H1 (cell line): ENCODE measurements at regions of chr15 and their contacts with region 1.

Region 1: DNA sequence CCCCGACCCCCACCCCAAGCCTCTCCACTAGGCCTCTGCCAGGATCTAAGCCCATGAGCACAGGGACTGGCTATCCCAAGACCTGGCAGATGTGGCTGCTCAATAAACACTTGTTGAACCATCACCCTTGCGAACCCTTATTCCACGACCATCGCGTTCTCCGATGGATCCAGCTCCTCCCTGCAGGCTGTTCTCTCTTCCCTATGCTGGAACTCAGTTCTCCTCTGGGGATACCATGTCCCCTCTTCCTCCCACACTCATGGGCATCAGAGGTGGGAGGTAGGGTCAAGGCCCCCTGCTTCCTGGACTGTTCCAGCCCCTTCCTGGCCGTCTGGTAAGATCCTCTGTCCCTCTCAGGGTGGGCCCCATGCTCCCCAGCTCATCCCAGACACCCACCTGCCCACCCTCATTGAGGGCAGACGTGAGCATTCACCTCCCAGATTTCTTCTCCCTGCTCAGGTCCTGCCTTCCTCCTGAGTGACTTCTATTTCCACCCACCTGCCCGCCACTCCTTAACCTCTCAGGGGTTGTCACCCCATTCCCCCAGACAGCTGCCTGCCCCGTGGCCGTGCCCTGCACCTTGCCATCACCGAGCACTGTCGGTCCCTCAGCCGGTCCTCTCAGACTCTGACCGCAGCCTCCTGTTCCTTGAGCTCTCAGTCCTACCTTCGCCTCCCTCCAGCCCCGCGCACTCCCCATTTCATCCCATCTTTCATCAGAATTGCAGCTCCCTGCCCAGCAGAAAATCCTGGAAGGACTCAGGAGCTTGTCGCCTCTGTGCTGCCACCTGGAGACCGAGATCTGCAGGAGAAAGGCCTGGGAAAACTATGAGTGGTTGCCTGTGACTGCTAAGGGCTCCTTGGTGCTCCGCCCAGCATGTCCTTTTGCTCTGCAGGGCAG is 42.0 kb downstream of the PML start:
- DNase-seq: peak; percentile 58 to 84
- H3K4me3 ChIP-seq: no peak overlapping the region
- H3K27ac ChIP-seq: no peak overlapping the region; the same call in 1 of the 2 replicates
- H3K4me1 ChIP-seq: peaks cover 0 to 7% (median 6%) of the 10 kb centered on the region in 4 experiments; a peak in 4 of 7 replicates
- H3K27me3 ChIP-seq: no peaks in the 10 kb centered on the region
- CTCF ChIP-seq: peak; percentile 68 to 88 (median 82)
- EP300 ChIP-seq: no peak
- POLR2A ChIP-seq: no peak
- RAD21 ChIP-seq: peak; percentile 60 to 73

Region 2: DNA sequence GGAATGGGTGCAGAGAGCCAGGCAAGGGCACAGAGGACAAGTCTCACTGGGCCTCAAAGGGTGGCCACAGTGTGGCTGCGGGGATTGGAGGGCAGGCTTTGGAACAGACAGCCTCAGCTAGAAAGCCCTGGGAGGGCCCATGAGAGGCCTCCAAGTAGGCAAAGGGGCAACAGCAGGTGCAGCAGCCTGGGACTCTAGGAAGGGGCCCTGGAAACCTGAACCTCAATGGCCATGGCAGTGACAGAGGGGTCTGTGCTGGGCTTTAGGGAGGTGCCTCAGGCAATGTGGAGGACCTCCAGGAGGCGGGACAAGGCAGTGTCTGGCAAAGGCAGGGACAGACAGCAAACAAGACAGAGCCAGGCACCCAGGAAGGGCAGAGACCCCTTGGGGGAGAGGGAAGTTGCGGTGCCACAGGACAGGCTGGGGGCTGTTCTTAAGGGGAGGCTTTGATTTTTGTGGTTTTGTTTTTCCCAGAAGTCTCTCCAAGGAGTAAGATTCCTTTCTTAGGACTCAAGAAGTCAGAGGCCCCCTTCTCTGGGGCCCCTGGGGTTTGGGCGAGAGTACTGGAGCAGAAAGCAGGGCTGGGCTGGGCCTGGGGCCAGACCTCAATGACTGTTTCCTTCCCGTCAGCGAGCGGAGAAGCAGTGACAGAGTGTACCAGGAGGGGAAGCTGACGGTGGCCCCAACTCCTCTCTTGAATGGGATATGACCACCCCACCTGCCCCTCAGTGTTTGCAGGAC is 54.1 kb before region 1 on chr15:
- CTCF ChIA-PET with region 1: interaction called, 56 read pairs
- POLR2A ChIA-PET with region 1: interaction called, 3 read pairs
- DNase-seq: no peak
- H3K4me3 ChIP-seq: no peak overlapping the region
- H3K27ac ChIP-seq: no peak overlapping the region
- H3K4me1 ChIP-seq: no peaks in the 10 kb centered on the region; a peak in 1 of 7 replicates
- H3K27me3 ChIP-seq: no peaks in the 10 kb centered on the region; a peak in 1 of 7 replicates
- CTCF ChIP-seq: no peak
- EP300 ChIP-seq: no peak
- POLR2A ChIP-seq: no peak
- RAD21 ChIP-seq: no peak

Region 3: DNA sequence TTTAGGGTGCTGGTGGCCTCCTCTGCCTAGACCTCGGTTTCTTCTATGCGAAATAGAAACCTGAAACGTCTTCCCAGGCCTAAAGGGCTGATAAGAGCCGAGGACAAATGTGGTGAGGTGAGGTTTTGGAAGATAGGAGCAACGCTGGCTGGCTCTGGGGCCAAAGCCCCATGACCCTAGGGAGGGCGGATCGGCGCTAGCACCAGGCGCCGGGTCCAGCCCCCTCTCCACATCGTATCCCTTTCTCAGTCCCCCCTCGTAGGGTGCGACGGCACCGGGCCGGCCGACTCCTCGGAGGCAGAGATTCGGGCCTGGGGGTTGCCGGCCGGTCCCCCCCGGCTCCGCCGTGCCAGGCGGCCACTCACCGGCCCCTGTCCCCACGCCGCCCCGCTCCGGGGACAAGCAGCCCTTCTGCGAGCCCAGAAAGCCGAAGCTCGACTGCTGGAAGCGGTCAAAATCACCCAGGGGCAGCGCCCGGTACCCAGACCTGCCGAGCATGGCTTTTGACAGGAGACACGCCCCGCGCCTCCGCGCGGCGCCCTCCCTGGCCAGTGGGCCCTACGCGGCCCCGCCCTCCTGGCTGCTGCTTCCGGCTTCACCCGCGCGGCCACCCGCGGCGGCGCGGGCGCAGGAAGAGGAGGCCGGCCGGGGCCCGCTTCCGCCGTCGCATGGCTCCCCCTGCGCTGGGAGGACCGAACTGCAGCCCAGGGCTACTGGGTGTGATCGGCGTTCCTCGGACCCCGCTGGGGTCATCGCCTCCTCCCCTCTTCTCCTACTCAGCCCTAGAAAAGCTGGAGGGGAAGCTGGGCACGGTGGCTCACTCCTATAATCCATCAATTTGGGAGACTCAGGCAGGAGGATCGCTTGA is 44.6 kb before region 1 on chr15 and contains the start of gene STOML1:
- CTCF ChIA-PET with region 1: interaction called, 56 read pairs
- POLR2A ChIA-PET with region 1: no interaction called
- DNase-seq: peak; percentile 71 to 100
- H3K4me3 ChIP-seq: peak within 1 kb of the TSS; percentile 33 to 90 (median 62)
- H3K27ac ChIP-seq: no peak within 1 kb of the TSS
- H3K4me1 ChIP-seq: peaks cover 0 to 7% (median under 1%) of the 10 kb centered on the region in 4 experiments; a peak in 3 of 7 replicates
- H3K27me3 ChIP-seq: peaks cover 0 to 8% (median 1%) of the 10 kb centered on the region in 4 experiments; a peak in 1 of 7 replicates
- CTCF ChIP-seq: peak; percentile 87 to 89 (median 89)
- EP300 ChIP-seq: no peak; a peak in 1 of 3 replicates
- POLR2A ChIP-seq: peak in 1 of 2 experiments; percentile 30; a peak in 1 of 3 replicates
- RAD21 ChIP-seq: 0 out of 4 replicates have a peak, but pooled peaks of 1 of the 2 experiments have one; percentile 15
- total RNA-seq, gene STOML1: 2.6 and 3.8 TPM in 2 replicates

Region 4: GRCh38 chr15:74011610-74012009 is 24.9 kb before region 1 on chr15:
- CTCF ChIA-PET with region 1: interaction called, 24 read pairs
- POLR2A ChIA-PET with region 1: no interaction called
- DNase-seq: no peak
- H3K4me3 ChIP-seq: no peak overlapping the region
- H3K27ac ChIP-seq: no peak overlapping the region
- H3K4me1 ChIP-seq: no peaks in the 10 kb centered on the region
- H3K27me3 ChIP-seq: no peaks in the 10 kb centered on the region
- CTCF ChIP-seq: no peak
- EP300 ChIP-seq: no peak
- POLR2A ChIP-seq: no peak
- RAD21 ChIP-seq: no peak

Region 5: GRCh38 chr15:74019734-74020133 is 16.8 kb before region 1 on chr15:
- CTCF ChIA-PET with region 1: interaction called, 32 read pairs
- POLR2A ChIA-PET with region 1: no interaction called
- DNase-seq: no peak
- H3K4me3 ChIP-seq: no peak overlapping the region
- H3K27ac ChIP-seq: no peak overlapping the region
- H3K4me1 ChIP-seq: no peaks in the 10 kb centered on the region
- H3K27me3 ChIP-seq: no peaks in the 10 kb centered on the region
- CTCF ChIP-seq: no peak
- EP300 ChIP-seq: no peak
- POLR2A ChIP-seq: no peak
- RAD21 ChIP-seq: no peak

Region 6: GRCh38 chr15:74025436-74025835 is 11.1 kb before region 1 on chr15:
- CTCF ChIA-PET with region 1: interaction called, 32 read pairs
- POLR2A ChIA-PET with region 1: interaction called, 9 read pairs
- DNase-seq: no peak
- H3K4me3 ChIP-seq: no peak overlapping the region
- H3K27ac ChIP-seq: 0 out of 2 replicates have a peak overlapping the region, but pooled peaks have one; percentile 38
- H3K4me1 ChIP-seq: no peaks in the 10 kb centered on the region
- H3K27me3 ChIP-seq: no peaks in the 10 kb centered on the region
- CTCF ChIP-seq: no peak
- EP300 ChIP-seq: no peak
- POLR2A ChIP-seq: no peak
- RAD21 ChIP-seq: no peak